Prostate gland (tissue), 2 donors: ENCODE measurements at regions of chr1 and their contacts with region 1.

Region 1: GRCh38 chr1:23422241-23423030 is 2.1 kb downstream of the TCEA3 start:
- DNase-seq: peak; percentile 68
- H3K4me3 ChIP-seq: no peak overlapping the region
- H3K27ac ChIP-seq: peak overlapping the region; percentile 84 to 88
- H3K4me1 ChIP-seq: peaks cover 6% of the 10 kb centered on the region
- H3K27me3 ChIP-seq: no peaks in the 10 kb centered on the region
- CTCF ChIP-seq: no peak
- POLR2A ChIP-seq: no peak

Region 2: DNA sequence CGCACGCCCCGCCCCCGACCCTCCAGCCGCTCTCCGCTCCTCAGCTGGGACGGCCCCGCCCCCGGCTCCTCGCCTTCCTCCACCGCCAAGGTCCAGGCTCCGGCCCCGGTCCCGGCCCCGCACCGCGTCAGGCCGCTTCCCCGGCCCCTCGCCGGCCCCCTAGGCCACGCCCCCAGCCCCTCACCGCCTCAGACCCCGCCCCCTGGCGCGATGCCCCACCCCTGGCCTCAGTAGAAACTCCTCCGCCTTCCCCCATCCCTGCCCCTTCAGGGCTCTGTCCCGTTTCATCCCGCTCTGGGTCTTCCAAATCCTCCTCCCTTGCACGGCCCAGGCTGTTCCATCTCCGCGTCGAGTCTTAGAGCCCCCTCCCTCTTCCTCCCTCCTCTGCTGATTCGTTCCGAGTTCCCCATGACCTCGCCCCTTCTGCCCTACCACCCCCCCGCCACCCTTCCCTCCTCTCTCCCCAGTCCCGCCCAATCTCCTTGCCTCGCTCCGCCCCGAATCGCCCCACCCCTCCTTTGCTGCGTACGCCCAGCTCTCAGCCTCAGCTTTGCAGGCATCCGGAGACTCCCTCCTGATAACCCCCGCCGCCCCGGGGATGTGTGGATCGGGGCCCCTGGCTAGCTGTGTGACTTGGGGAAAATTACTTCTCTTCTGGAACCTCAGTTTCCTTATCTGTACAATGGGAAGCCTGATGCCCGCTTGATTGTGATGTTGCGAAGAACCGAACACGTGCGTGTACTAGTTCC is 62.0 kb after region 1 on chr1:
- intact Hi-C with region 1: loop called (anchors 5 kb)
- DNase-seq: peak; percentile 89
- H3K4me3 ChIP-seq: peak overlapping the region; percentile 90 to 98
- H3K27ac ChIP-seq: peak overlapping the region; percentile 91 to 93
- H3K4me1 ChIP-seq: no peaks in the 10 kb centered on the region
- H3K27me3 ChIP-seq: no peaks in the 10 kb centered on the region
- CTCF ChIP-seq: no peak
- POLR2A ChIP-seq: no peak